Activated T-helper 1 cell treated with anti-CD3 and anti-CD28 coated beads, Interleukin-12 subunit alpha, Interleukin-12 subunit beta, Interleukin-2, Interleukin-4 antibody, amounts not matched to agents 30 ng/mL and 10 ng/mL and 1 ng/mL, durations not matched to agents 14 hours and 24 hours and 36 hours (primary cell): ENCODE measurements at regions of chr12 and their contacts with region 1.

Region 1: DNA sequence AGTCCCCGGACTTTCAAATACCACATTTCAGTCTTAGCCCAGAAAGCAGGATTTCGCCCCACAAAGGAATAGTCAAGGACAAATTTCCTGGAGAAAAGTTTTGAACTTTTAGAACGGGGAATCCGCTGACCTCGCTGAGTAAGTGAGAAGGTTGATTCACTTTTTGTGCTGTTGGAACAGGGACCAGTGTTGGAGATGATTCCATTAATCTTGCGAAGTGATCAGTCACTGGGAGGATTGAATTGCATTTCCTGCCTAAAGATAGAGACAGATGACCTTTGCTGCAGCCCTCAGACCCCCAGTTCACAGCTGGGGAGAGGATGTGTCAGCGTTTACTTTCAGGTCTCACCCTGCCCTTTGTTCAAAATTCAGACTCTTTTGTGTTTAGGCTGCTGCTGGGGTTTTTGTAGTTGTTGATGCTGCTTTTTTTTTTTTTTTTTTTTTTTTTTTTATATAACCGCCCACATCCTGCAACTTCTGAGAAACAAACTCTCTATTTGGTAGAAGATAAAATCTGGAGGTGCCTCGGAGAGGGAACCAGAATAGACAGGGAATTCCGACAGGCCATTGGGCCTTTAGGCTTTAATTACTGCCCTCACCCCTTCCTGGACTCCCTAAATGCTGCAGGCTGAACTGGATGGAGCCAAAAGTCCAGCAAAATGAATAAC is 9.8 kb upstream of the KDM2B start:
- DNase-seq: peak; percentile 64
- H3K4me3 Mint-ChIP-seq: peak overlapping the region; percentile 80
- H3K27ac Mint-ChIP-seq: peak overlapping the region; percentile 95
- H3K4me1 Mint-ChIP-seq: peaks cover 26% of the 10 kb centered on the region
- H3K27me3 Mint-ChIP-seq: no peaks in the 10 kb centered on the region

Region 2: DNA sequence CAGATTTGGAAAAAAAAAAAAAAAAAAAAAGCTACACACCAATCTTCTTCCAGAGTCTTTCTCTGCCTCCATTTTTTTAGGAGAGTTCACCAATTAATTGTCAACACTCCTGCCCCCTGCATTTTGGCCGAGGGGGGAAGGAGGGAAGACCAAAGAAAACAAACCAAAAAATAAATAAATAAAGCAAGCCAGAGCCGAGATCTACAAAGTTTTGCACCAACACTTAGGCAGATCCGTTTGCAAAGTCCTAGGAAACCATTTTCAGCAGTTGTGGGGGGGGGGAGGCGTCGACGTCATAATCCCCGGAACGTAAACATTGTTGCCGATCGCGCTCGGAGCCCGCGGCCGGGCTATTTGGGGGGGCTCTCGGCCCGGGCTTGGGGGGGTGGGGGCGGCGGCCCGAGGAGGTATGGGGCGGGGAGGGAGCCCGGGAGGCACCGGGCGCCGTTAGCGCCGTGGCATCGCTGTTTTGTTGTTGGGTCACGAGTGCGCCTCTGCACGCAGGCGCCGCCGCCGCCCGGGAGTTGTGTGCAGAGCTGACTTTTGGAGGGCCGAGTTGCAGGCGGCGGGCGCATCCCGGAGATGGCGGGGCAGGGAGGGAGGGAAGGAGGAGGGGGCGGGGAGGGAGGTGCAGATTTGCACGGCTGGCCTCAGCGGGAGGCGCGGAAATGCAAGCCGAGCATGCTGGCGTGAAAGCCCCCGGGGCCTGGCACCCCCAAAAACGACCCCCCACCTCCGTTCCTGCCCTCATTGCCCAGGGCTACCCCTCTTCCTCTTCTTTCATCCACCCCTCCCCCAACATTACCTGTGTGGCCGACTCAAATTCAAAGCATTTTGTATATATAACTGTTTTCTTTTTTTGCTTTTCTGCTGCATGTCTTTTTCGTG is 10.4 kb before region 1 on chr12:
- intact Hi-C with region 1: loop called (anchors 1 kb)
- DNase-seq: peak; percentile 67
- H3K4me3 Mint-ChIP-seq: peak overlapping the region; percentile 98
- H3K27ac Mint-ChIP-seq: peak overlapping the region; percentile 100
- H3K4me1 Mint-ChIP-seq: peaks cover 40% of the 10 kb centered on the region
- H3K27me3 Mint-ChIP-seq: no peaks in the 10 kb centered on the region

Region 3: GRCh38 chr12:121657305-121658008 is 66.8 kb after region 1 on chr12:
- intact Hi-C with region 1: loop called (anchors 2 kb)
- DNase-seq: peak; percentile 15
- H3K4me3 Mint-ChIP-seq: peak overlapping the region; percentile 26
- H3K27ac Mint-ChIP-seq: peak overlapping the region; percentile 71
- H3K4me1 Mint-ChIP-seq: peaks cover 57% of the 10 kb centered on the region
- H3K27me3 Mint-ChIP-seq: peaks cover 5% of the 10 kb centered on the region

Region 4: DNA sequence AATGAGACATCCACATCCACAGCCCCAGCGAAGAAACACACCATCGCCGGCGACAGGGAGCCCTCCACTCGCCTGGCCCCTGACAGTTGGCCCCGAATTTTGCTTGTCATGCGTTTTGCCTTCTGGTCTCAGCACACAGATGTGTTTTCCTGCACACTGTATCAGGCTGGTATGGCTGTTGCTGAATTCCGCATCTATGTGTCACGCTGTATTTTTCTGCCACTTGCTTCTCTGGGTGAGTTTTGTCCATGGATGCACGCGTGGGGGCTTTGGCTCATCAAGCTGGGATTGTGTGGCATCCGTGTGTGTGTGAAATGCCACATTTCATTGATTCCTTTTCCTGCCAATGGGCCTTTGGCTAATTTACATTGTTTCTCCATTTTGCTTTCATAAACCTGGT is 1416.4 kb after region 1 on chr12:
- intact Hi-C with region 1: no loop called
- DNase-seq: no peak
- H3K4me3 Mint-ChIP-seq: no peak overlapping the region
- H3K27ac Mint-ChIP-seq: no peak overlapping the region
- H3K4me1 Mint-ChIP-seq: no peaks in the 10 kb centered on the region
- H3K27me3 Mint-ChIP-seq: no peaks in the 10 kb centered on the region